Mammary epithelial cell (primary cell): ENCODE measurements at regions of chr4 and their contacts with region 1.

Region 1: DNA sequence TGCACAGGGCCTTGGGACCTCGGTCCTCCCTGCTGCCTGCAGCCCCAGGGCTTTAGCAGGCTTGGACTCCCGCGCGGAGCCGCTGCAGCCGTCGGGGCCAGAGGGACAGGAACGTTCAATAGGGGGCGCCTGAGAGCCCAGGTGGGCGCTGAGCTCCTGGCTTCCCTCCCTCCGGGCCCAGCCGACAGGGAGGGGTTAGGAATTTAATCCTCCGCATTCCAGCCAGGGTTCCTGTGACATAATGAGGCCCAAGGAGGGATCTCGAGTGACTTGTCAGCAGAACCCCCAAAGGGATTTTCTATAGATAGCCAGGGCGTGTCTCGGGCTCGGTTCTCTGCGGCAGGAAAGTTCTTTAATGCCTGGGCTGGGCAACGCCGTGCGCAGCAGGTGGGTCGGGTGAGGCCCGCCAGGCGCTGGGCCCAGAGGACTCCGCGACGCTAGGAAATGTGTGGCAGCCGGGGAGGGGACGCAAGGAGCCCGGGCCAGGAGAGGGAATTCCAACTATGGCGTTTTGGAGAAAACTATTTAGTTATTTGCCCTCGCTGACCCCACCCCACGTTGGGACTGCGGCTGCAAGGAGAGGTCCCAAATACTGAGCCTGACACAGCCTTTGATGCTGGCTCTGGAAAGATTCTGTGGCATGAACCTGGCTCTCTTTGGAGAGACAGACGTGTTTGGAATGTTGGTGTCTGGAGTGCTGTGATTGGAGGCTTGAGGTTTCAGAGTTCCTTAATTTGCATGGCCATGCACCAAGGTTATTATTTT is 285.2 kb upstream of the GATB start:
- DNase-seq: no peak
- H3K4me3 ChIP-seq: peak overlapping the region in 1 of 3 experiments; percentile 22
- H3K27ac ChIP-seq: no peak overlapping the region
- H3K4me1 ChIP-seq: peaks cover 4% of the 10 kb centered on the region
- H3K27me3 ChIP-seq: no peaks in the 10 kb centered on the region
- CTCF ChIP-seq: peak; percentile 53 to 70

Region 2: DNA sequence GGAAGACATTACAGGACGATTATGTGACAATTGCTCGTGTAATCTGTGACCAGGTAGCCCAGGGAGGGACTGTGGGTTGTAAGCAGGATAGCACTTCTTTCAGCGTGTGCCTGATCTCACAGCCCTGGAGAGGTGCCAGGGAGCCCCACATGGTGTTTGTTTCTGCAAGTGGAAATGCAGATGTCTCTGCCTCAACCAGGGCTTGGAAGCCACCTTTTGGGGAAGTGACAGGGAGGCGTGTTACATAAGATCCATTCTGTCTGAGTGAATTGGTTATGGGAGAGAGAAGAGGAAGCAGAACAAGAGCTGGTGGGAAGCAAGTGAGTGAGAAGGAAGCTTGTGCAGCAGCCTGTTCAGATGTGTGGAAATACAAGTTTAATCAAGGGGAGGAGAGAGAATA is 180.7 kb before region 1 on chr4:
- CTCF ChIA-PET with region 1: interaction called, 10 read pairs
- dilution Hi-C with region 1: no loop called
- in situ Hi-C with region 1: no loop called
- intact Hi-C with region 1: no loop called
- DNase-seq: no peak
- H3K4me3 ChIP-seq: no peak overlapping the region
- H3K27ac ChIP-seq: no peak overlapping the region
- H3K4me1 ChIP-seq: no peaks in the 10 kb centered on the region
- H3K27me3 ChIP-seq: peaks cover 6% of the 10 kb centered on the region
- CTCF ChIP-seq: no peak